ENCODE measurements at regions of chr7 and their contacts with region 1.

Region 1: DNA sequence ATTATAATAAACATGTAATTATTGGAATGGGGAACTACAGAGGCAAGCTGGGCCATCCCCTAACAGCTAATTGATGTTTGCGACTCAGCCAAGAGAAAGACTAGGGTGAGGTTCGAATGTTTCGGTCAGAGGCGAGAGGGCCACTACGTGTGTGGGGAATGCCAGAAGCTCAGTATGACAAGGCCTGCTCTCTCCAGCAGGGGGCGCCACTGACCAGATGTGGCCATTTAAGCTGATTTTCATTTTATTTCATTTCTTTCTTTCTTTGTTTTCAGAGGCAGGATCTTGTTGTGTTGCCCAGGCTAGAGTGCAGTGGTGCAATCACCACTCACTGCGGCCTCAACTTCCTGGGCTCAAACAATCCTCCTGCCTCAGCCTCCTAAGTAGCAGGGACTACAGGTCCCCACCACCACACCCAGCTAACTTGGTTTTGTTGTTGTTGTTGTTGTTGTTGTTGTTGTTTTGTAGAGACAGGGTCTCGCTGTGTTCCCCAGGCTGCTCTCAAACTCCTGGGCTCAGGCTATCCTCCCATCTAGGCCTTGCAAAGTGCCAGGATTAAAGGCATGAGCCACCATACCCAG is 38.1 kb downstream of the TMEM130 start:
- DNase-seq: no peak
- H3K4me3 ChIP-seq: no peak overlapping the region
- H3K27me3 ChIP-seq: peaks cover under 1% of the 10 kb centered on the region; the same call in 1 of the 2 replicates
- CTCF ChIP-seq: peak; percentile 65

Region 2: DNA sequence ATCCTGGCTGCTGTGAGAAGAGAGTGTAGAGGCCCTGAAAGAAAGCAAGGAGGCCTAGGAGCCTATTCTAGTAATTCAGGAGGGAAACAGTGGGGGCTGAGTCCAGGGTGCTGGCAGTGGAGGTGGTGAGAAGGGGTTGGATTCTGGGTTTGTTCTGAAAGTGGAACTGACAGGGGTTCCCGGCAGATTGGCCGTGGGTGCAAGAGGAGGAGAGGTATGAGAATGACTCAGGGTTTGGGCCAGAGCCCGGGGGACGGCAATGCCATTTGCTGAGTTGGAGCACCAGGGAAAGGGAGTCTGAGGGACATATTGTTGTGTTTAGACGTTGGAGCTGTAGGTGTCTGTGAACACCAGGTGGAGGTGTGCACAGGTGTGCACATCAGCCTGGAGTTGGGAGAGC is 176.1 kb before region 1 on chr7:
- CTCF ChIA-PET with region 1: no interaction called
- POLR2A ChIA-PET with region 1: no interaction called
- DNase-seq: no peak
- H3K4me3 ChIP-seq: no peak overlapping the region
- H3K27me3 ChIP-seq: no peaks in the 10 kb centered on the region
- CTCF ChIP-seq: no peak

Region 3: DNA sequence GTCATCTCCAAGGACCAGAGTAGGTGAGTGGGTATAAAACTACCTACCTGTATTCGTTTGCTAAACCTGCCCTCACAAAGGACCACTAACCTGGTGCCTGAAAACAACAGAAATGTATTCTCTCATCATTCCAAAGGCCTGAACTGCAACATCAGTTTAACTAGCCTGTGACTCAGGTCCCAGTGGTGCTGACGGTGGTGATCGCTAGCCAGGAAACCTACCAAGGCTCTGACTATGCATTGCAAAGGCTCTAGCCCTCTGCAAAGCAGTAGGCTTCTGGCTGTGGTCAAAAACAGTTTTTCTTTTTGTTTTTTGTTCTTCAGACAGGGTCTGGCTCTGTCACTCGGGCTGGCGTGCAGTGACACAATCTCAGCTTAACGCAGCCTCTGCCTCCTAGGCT is 107.1 kb before region 1 on chr7:
- CTCF ChIA-PET with region 1: no interaction called
- POLR2A ChIA-PET with region 1: no interaction called
- DNase-seq: no peak
- H3K4me3 ChIP-seq: no peak overlapping the region
- H3K27me3 ChIP-seq: no peaks in the 10 kb centered on the region
- CTCF ChIP-seq: no peak

Region 4: DNA sequence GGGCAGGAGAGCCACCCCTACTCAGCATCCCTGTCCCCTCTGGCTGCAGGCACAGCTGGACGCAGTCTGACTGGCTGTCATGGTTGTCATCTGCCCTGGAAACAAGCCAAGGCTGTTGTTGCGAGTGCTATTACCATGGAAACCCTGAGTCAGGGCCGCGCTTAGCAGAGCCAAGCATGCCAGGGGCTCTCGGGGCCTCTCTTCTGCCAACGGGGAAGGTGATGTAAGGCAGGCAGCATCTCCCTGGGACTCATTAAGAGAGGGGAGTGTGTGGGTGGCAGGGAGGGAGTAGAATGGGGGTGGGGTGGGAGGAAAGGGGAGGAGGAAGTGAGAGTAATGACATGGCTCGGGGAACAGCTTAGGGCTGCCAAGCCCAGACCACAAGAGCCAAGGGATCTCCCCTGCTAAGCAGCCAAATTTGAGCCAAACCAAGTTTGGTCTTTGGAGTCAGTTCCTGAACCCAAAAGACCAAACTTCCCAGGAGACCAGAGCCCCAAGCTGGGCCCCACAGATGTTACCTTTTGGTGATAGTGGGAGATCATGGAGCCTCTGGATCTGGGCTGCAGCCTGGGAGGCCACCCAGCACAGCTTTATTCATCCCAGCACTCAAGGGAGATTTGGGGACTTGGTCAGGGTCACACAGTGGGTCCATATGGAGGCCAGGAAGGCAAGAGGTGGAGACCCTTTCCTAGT is 29.5 kb before region 1 on chr7:
- CTCF ChIA-PET with region 1: no interaction called
- POLR2A ChIA-PET with region 1: no interaction called
- DNase-seq: no peak
- H3K4me3 ChIP-seq: no peak overlapping the region
- H3K27me3 ChIP-seq: no peaks in the 10 kb centered on the region
- CTCF ChIP-seq: no peak

Region 5: GRCh38 chr7:98870121-98870651 is 38.5 kb after region 1 on chr7:
- CTCF ChIA-PET with region 1: interaction called, 18 read pairs
- POLR2A ChIA-PET with region 1: no interaction called
- DNase-seq: no peak
- H3K4me3 ChIP-seq: peak overlapping the region; percentile 56
- H3K27me3 ChIP-seq: peaks cover 10% of the 10 kb centered on the region
- CTCF ChIP-seq: 0 out of 2 replicates have a peak, but pooled peaks have one; percentile 1